ENCODE measurements at regions of chr12 and their contacts with region 1.

Region 1: GRCh38 chr12:57520053-57520871 is at the start of gene DDIT3:
- DNase-seq: peak; percentile 96 to 100
- H3K4me3 ChIP-seq: peak within 1 kb of the TSS; percentile 80 to 95 (median 91)
- H3K27ac ChIP-seq: peak within 1 kb of the TSS; percentile 88
- H3K4me1 ChIP-seq: peaks cover 8 to 24% (median 14%) of the 10 kb centered on the region in 4 experiments
- H3K27me3 ChIP-seq: no peaks in the 10 kb centered on the region
- CTCF ChIP-seq: no peak; a peak in 1 of 4 replicates
- EP300 ChIP-seq: peak in 1 of 2 experiments; percentile 16; a peak in 1 of 3 replicates
- POLR2A ChIP-seq: peak in 1 of 2 experiments; percentile 99; a peak in 2 of 3 replicates
- RAD21 ChIP-seq: no peak
- total RNA-seq, gene DDIT3: 4.9 TPM in 2 replicates

Region 2: GRCh38 chr12:57535764-57536596 is 15.7 kb after region 1 on chr12:
- CTCF ChIA-PET with region 1: interaction called, 29 read pairs
- POLR2A ChIA-PET with region 1: interaction called, 41 read pairs
- DNase-seq: no peak
- H3K4me3 ChIP-seq: no peak overlapping the region
- H3K27ac ChIP-seq: no peak overlapping the region
- H3K4me1 ChIP-seq: peaks cover 0 to 2% (median 0%) of the 10 kb centered on the region in 4 experiments; a peak in 1 of 7 replicates
- H3K27me3 ChIP-seq: peaks cover 0 to 1% (median 0%) of the 10 kb centered on the region in 4 experiments; a peak in 1 of 7 replicates
- CTCF ChIP-seq: no peak
- EP300 ChIP-seq: no peak
- POLR2A ChIP-seq: no peak
- RAD21 ChIP-seq: no peak

Region 3: GRCh38 chr12:57541001-57541400 is 20.7 kb after region 1 on chr12:
- CTCF ChIA-PET with region 1: interaction called, 29 read pairs
- POLR2A ChIA-PET with region 1: interaction called, 55 read pairs
- DNase-seq: no peak
- H3K4me3 ChIP-seq: no peak overlapping the region
- H3K27ac ChIP-seq: no peak overlapping the region
- H3K4me1 ChIP-seq: peaks cover 0 to 7% (median 1%) of the 10 kb centered on the region in 4 experiments; a peak in 5 of 7 replicates
- H3K27me3 ChIP-seq: no peaks in the 10 kb centered on the region
- CTCF ChIP-seq: no peak
- EP300 ChIP-seq: no peak
- POLR2A ChIP-seq: no peak
- RAD21 ChIP-seq: no peak

Region 4: DNA sequence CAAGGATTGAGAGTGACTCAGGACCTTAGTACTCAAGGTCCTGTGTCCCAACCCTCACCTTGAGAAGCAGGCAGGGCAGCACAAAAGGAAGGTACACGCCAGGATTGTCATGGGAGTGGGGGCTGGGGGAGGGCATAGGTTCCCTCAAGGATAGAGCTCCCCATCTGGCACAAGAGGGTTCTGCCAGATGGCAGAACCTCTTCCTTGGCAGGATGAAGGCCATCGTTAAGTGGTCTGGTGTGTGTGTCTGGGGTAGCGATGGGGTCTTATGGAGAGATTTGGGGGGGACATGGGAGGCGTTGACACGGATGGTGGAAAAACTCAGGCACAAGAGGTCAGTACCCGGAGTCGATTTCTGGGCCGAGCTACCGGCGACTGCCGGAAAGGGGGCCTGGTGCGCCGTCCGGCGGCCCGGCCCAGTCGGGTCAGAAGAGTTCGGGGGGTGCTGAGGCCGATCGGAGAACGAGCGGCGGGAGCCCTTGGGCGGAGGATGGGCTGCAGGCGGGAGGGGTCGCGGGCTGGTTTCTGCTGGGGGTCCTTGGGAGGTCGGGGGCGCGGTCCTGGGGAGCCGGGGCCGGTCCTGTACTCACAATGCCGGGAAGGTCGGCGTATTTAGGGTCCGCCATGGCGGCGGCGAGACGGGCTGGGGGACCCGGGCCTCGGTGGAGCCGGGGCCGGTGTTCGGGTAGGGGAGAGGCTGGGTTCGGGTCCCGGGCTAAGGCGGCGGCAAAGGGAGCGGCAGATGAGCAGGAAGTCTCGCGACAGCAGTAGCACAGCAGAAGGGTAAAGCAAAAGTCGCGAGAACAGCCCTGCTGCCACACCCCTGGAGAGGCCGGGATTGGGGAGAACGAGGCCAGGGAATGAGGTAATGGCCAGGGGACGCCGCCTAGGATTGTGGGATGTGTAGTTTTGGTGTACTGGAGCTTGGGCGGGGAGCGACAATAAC is 26.4 kb after region 1 on chr12 and contains the start of gene DCTN2:
- CTCF ChIA-PET with region 1: no interaction called
- POLR2A ChIA-PET with region 1: interaction called, 55 read pairs
- DNase-seq: peak; percentile 83 to 91
- H3K4me3 ChIP-seq: peak within 1 kb of the TSS; percentile 63 to 90 (median 81)
- H3K27ac ChIP-seq: peak within 1 kb of the TSS; percentile 44; the same call in 1 of the 2 replicates
- H3K4me1 ChIP-seq: peaks cover 6 to 18% (median 10%) of the 10 kb centered on the region in 4 experiments; a peak in 6 of 7 replicates
- H3K27me3 ChIP-seq: peaks cover 0 to 5% (median 3%) of the 10 kb centered on the region in 4 experiments; a peak in 2 of 7 replicates
- CTCF ChIP-seq: peak in 1 of 3 experiments; percentile 23; a peak in 1 of 4 replicates
- EP300 ChIP-seq: no peak
- POLR2A ChIP-seq: no peak; a peak in 1 of 3 replicates
- RAD21 ChIP-seq: no peak
- total RNA-seq, gene DCTN2: 89.3 and 90.3 TPM in 2 replicates